ENCODE measurements at regions of chr14 and their contacts with region 1.

Region 1: GRCh38 chr14:81849714-81850113 is 316.1 kb upstream of the SEL1L start:
- DNase-seq: no peak
- ATAC-seq: no peak
- H3K4me3 ChIP-seq: no peak overlapping the region
- H3K27ac ChIP-seq: no peak overlapping the region
- H3K4me1 ChIP-seq: no peaks in the 10 kb centered on the region
- H3K27me3 ChIP-seq: no peaks in the 10 kb centered on the region
- CTCF ChIP-seq: no peak

Region 2: DNA sequence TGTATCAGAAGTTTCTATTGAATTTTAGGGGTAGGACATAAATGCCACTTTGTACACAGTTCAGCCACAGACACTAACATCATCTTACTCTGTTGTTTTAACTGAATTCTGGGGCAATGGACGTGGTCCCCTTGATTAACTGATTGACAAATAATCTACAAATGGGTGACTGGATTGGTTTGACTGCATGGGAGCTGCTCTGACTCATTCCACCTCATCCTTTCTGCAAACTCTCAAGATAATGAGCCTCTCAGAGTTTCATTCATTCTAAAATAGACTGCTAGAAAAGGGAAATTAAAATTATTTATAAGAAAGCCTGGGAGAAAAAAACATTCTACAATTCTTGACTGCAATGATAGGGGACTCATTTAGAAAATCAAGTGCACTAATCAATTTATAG is 254.3 kb after region 1 on chr14:
- intact Hi-C with region 1: loop called in 1 of 10 experiments (anchors 5 kb)
- DNase-seq: no peak
- ATAC-seq: no peak
- H3K4me3 ChIP-seq: no peak overlapping the region
- H3K27ac ChIP-seq: no peak overlapping the region
- H3K4me1 ChIP-seq: no peaks in the 10 kb centered on the region
- H3K27me3 ChIP-seq: no peaks in the 10 kb centered on the region
- CTCF ChIP-seq: no peak